ENCODE measurements at regions of chr11 and their contacts with region 1.

Region 1: GRCh38 chr11:124763156-124763947 is 1.3 kb upstream of the ESAM start:
- DNase-seq: no peak
- ATAC-seq: peak; percentile 67
- H3K4me3 ChIP-seq: peak overlapping the region; percentile 59 to 88
- H3K27ac ChIP-seq: peak overlapping the region; percentile 37; the same call in 1 of the 2 replicates
- H3K4me1 ChIP-seq: peaks cover 3% of the 10 kb centered on the region; the same call in 1 of the 2 replicates
- H3K27me3 ChIP-seq: no peaks in the 10 kb centered on the region
- CTCF ChIP-seq: peak; percentile 96

Region 2: DNA sequence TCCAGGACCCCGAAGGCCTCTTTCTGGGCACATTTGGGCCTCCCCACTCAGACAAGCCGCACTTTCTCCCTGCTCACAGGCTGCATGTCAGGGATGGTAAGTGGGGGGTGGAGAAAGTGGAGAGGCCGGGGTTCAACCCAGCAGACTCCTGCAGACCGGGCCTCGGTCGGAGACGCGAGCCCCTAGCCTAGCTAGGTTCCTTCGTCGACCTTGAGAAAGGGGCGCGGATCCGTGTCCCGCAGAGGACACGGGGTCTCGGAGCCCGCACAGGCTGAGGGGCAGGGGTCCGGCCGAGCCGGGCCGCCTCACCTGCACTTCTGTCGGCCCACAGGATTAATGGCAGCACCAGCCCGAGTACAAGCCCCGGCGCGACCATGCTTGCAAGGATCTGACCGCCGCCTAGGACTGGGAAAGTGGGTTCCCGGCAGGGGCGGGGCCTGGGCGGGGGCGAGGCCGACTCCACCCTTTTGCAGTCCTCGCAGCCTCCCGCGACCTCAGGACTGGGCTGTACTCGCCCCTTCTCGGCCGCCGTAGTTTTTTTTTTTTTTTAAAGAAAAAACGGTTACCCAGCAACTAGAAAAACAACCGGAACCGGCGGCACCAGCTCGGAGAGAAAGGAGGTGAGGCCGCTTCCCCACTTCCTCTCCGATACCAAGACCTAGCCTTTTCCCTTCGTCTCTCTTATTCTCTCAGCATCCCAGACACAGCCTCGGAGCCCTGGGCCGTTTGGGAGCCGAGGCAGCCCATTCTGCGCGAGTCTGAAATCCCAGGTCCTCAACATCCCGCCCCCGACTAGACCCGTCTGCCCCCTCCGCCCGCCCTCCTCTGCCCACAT is 89.8 kb before region 1 on chr11 and contains the starts of genes SIAE and SPA17:
- CTCF ChIA-PET with region 1: interaction called, 7 read pairs
- POLR2A ChIA-PET with region 1: interaction called, 5 read pairs
- in situ Hi-C with region 1: no loop called
- intact Hi-C with region 1: loop called (anchors 1 kb)
- DNase-seq: peak; percentile 81
- ATAC-seq: peak; percentile 97
- H3K4me3 ChIP-seq: peak within 1 kb of the TSS; percentile 67 to 75
- H3K27ac ChIP-seq: peak within 1 kb of the TSS; percentile 93
- H3K4me1 ChIP-seq: peaks cover 13% of the 10 kb centered on the region
- H3K27me3 ChIP-seq: no peaks in the 10 kb centered on the region
- CTCF ChIP-seq: no peak
- total RNA-seq, gene SIAE: 14.9 TPM
- total RNA-seq, gene SPA17: 10.1 TPM

Region 3: DNA sequence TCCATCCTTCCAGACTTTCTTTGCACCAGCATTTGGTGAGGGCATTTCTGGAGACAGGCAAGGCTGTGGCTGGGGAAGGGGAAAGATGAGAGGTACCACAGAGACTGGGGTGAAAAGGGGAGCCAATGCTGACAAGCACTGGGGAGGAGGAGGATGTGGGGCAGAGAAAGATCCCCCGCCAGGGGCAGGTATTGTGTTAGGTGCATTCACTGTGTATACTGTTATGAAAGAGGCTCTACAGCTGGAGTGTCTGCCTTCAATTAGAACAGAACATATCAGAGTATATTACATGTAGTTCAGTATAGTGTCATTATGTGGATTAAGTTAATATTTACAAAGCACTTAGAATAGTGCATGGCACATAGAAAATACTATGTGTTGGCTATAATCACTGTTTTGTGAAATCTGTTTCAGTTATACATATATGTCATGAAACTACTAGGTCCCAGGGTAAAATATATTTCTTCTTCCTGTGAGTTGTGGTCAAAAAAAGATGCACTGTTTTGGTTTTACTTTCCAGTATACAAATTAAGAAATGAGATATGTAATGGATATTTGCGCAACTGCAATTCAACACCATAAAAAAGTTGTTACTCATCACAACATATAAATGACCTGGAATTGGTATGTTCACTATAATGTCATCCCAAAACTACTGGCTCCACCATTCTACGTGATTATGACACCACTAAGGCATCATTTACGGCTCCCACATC is 28.4 kb after region 1 on chr11:
- CTCF ChIA-PET with region 1: interaction called, 14 read pairs
- POLR2A ChIA-PET with region 1: no interaction called
- in situ Hi-C with region 1: no loop called
- intact Hi-C with region 1: loop called (anchors 5 kb)
- DNase-seq: no peak
- ATAC-seq: no peak
- H3K4me3 ChIP-seq: no peak overlapping the region
- H3K27ac ChIP-seq: no peak overlapping the region
- H3K4me1 ChIP-seq: peaks cover 10% of the 10 kb centered on the region
- H3K27me3 ChIP-seq: no peaks in the 10 kb centered on the region
- CTCF ChIP-seq: no peak

Region 4: DNA sequence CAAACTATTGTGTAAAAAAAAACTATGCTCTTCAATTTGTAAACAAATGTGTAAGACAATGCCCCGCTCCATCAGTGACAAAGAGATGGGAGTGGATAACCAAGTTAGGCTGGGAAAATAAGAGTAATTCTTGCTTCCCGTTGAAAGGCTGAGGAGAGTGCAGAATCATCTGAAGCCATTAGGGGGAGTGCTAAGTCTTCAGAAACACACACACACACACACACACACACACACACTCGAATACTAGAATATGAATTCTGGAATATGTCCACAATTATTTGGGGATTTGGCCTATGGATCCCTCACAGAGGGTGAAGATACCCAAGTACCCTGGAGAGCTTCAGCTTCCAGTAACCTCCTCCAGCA is 74.1 kb after region 1 on chr11:
- CTCF ChIA-PET with region 1: interaction called, 11 read pairs
- POLR2A ChIA-PET with region 1: no interaction called
- in situ Hi-C with region 1: no loop called
- intact Hi-C with region 1: loop called (anchors 2 kb)
- DNase-seq: peak; percentile 62
- ATAC-seq: peak; percentile 82
- H3K4me3 ChIP-seq: no peak overlapping the region
- H3K27ac ChIP-seq: no peak overlapping the region
- H3K4me1 ChIP-seq: no peaks in the 10 kb centered on the region; the same call in 1 of the 2 replicates
- H3K27me3 ChIP-seq: peaks cover 47% of the 10 kb centered on the region
- CTCF ChIP-seq: peak; percentile 82

Region 5: DNA sequence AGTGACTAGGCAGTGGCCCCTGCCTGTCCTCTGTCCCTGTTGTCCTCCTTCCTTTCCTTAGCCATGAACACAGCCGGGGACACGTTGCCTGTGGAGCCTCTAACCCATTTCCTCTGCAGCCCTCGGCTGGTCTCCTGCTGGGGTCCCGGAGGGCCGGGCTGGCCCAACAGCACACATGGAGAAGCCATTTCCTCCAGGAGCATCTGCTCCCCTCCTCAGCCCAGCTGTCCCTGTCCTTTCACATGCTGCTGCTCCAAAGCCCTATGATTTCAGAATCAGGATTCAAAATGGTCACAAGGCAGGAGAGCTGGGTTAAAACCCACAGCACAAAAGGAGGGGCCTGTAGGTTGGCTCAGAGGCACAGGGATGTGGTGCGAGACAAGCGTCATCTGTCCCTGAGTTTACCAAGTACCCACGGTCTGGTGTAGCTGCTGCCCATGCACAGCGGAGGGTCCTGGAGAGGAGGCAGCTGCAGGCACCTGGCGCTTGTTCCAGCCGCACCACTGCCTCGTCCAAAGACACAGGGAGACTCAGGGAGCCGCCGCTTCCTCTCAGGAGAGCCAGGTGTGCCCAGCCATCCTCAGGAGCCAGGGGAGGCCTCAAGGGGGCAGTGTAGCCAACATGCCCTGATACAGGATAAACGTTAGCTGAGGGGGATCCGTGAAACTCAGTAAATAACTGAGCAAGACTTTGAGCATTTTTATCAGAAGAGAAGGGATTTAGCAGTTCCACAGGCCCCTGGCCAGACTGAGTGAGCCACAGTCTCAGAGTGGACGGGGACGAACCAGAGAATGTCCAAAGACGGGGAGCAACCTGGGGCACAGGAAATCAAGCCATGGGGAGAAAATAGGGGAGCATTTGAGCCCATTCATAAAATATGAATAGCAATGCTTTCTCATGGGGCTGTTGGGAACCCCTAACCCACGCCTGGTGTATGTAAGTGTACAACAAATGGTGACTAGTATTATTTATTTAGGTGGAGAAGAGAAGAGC is 1178.6 kb after region 1 on chr11:
- CTCF ChIA-PET with region 1: no interaction called
- POLR2A ChIA-PET with region 1: interaction called, 16 read pairs
- in situ Hi-C with region 1: no loop called
- intact Hi-C with region 1: no loop called
- DNase-seq: no peak
- ATAC-seq: peak; percentile 88
- H3K4me3 ChIP-seq: no peak overlapping the region
- H3K27ac ChIP-seq: no peak overlapping the region
- H3K4me1 ChIP-seq: no peaks in the 10 kb centered on the region
- H3K27me3 ChIP-seq: no peaks in the 10 kb centered on the region
- CTCF ChIP-seq: peak; percentile 95

Measured in Panc1 (cell line).